ENCODE measurements at regions of chr19 and their contacts with region 1.

Region 1: DNA sequence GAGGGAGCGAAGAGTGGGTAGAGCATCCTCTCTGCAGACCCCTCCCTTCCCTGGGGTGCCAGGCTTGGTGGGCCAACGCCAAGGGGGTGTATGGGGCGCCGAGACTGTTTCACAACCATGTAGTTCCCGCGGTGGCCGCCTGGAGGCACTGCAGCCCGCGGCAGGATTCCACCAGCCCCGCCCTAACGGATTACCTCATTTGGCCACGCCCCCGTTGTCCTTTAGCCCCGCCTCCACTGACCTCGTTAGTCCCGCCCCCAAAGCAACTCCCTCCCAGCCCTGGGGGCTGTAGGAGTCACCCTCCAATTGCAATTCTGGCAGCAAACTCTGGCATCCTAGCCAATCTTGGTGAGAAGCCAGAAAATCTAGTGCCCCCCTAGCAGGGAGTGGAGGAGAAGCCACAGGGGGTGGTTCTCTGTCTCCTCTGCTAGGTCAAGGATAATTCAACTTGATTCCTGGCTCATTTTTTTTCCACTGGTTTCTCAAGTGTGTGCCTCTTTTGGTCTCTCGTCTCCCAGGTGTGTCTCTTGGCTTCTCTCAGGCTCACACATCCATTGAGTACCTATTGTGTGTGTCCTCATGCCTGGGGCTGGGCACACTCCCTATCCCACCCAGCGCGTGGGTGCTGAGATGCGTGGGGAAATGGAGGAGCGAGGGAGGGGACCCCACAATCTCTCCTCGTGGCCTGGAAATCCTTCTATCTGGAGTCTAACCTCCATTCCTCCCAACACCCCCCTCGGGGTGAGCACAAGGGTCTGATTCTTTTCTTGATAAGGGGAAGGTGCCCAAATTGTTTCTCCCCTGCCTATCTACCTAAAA is 2.0 kb downstream of the OLFM2 start:
- DNase-seq: peak; percentile 77 to 100
- H3K4me3 ChIP-seq: peak overlapping the region; percentile 67 to 83 (median 80); a peak in 5 of 8 replicates
- H3K27ac ChIP-seq: no peak overlapping the region
- H3K4me1 ChIP-seq: peaks cover 4 to 14% (median 6%) of the 10 kb centered on the region in 4 experiments
- H3K27me3 ChIP-seq: peaks cover 0 to 2% (median 0%) of the 10 kb centered on the region in 4 experiments; a peak in 2 of 7 replicates
- CTCF ChIP-seq: peak; percentile 94 to 97 (median 96)
- EP300 ChIP-seq: no peak; a peak in 1 of 3 replicates
- POLR2A ChIP-seq: 0 out of 3 replicates have a peak, but pooled peaks of 1 of the 2 experiments have one; percentile 29
- RAD21 ChIP-seq: peak; percentile 96 to 98

Region 2: GRCh38 chr19:9834307-9834725 is 100.0 kb before region 1 on chr19:
- CTCF ChIA-PET with region 1: no interaction called
- POLR2A ChIA-PET with region 1: no interaction called
- DNase-seq: no peak
- H3K4me3 ChIP-seq: peak overlapping the region in 2 of 4 experiments; percentile 24 to 49; a peak in 3 of 8 replicates
- H3K27ac ChIP-seq: no peak overlapping the region
- H3K4me1 ChIP-seq: peaks cover 0 to 4% (median 1%) of the 10 kb centered on the region in 4 experiments; a peak in 3 of 7 replicates
- H3K27me3 ChIP-seq: no peaks in the 10 kb centered on the region
- CTCF ChIP-seq: no peak
- EP300 ChIP-seq: no peak
- POLR2A ChIP-seq: no peak
- RAD21 ChIP-seq: no peak

Region 3: DNA sequence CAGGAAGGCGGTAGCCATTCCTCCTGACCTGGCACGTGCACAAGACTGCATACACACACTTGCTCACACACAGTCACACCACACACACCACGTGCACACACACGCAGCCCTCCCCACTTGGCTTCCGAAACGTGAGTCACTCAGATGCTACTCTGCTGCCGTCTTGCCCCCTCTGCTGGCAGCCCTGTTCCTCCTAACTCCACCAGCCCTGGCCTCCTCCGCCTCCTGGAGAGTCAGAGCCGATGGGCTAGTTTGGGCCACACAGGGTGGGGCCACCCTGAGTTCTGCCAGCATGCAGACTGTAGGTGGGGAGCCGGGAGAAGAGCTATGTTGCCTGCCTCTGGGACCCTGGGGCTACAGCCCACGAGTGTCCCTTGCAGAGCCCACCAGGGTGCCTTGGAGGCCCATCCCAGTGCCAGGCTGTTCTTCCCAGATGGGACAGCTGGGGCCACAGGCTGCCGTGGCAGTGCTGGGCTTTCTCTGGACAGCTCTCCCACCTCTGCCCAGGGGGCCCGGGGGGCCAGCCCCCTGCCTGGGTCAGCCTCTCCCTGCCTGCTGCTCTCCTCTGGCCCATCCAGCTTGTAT is 87.2 kb before region 1 on chr19:
- CTCF ChIA-PET with region 1: interaction called, 11 read pairs
- POLR2A ChIA-PET with region 1: no interaction called
- DNase-seq: peak; percentile 51 to 79
- H3K4me3 ChIP-seq: no peak overlapping the region
- H3K27ac ChIP-seq: no peak overlapping the region
- H3K4me1 ChIP-seq: peaks cover 0 to 16% (median 9%) of the 10 kb centered on the region in 4 experiments; a peak in 6 of 7 replicates
- H3K27me3 ChIP-seq: no peaks in the 10 kb centered on the region
- CTCF ChIP-seq: peak; percentile 68 to 96 (median 93)
- EP300 ChIP-seq: no peak
- POLR2A ChIP-seq: no peak
- RAD21 ChIP-seq: peak; percentile 53 to 66

Region 4: GRCh38 chr19:9857920-9858746 is 76.2 kb before region 1 on chr19:
- CTCF ChIA-PET with region 1: no interaction called
- POLR2A ChIA-PET with region 1: no interaction called
- DNase-seq: no peak
- H3K4me3 ChIP-seq: no peak overlapping the region
- H3K27ac ChIP-seq: no peak overlapping the region
- H3K4me1 ChIP-seq: no peaks in the 10 kb centered on the region; a peak in 1 of 7 replicates
- H3K27me3 ChIP-seq: no peaks in the 10 kb centered on the region
- CTCF ChIP-seq: no peak
- EP300 ChIP-seq: no peak
- POLR2A ChIP-seq: no peak
- RAD21 ChIP-seq: no peak

Region 5: GRCh38 chr19:9966448-9967143 is 32.3 kb after region 1 on chr19:
- CTCF ChIA-PET with region 1: interaction called, 22 read pairs
- POLR2A ChIA-PET with region 1: interaction called, 4 read pairs
- DNase-seq: peak; percentile 49 to 83
- H3K4me3 ChIP-seq: peak overlapping the region; percentile 4 to 56 (median 42); a peak in 7 of 8 replicates
- H3K27ac ChIP-seq: no peak overlapping the region
- H3K4me1 ChIP-seq: peaks cover 0 to 9% (median 0%) of the 10 kb centered on the region in 4 experiments; a peak in 2 of 7 replicates
- H3K27me3 ChIP-seq: peaks cover 0 to 10% (median 7%) of the 10 kb centered on the region in 4 experiments; a peak in 6 of 7 replicates
- CTCF ChIP-seq: peak in 2 of 3 experiments; percentile 27; a peak in 2 of 4 replicates
- EP300 ChIP-seq: no peak
- POLR2A ChIP-seq: 0 out of 3 replicates have a peak, but pooled peaks of 1 of the 2 experiments have one; percentile 29
- RAD21 ChIP-seq: peak in 1 of 2 experiments; percentile 38; a peak in 2 of 4 replicates

Region 6: GRCh38 chr19:10000171-10000826 is 66.0 kb after region 1 on chr19:
- CTCF ChIA-PET with region 1: interaction called, 82 read pairs
- POLR2A ChIA-PET with region 1: interaction called, 4 read pairs
- DNase-seq: peak; percentile 44 to 87
- H3K4me3 ChIP-seq: no peak overlapping the region
- H3K27ac ChIP-seq: no peak overlapping the region
- H3K4me1 ChIP-seq: no peaks in the 10 kb centered on the region
- H3K27me3 ChIP-seq: no peaks in the 10 kb centered on the region; a peak in 3 of 7 replicates
- CTCF ChIP-seq: peak; percentile 77 to 89 (median 79)
- EP300 ChIP-seq: no peak
- POLR2A ChIP-seq: no peak
- RAD21 ChIP-seq: peak; percentile 79 to 80

Region 7: DNA sequence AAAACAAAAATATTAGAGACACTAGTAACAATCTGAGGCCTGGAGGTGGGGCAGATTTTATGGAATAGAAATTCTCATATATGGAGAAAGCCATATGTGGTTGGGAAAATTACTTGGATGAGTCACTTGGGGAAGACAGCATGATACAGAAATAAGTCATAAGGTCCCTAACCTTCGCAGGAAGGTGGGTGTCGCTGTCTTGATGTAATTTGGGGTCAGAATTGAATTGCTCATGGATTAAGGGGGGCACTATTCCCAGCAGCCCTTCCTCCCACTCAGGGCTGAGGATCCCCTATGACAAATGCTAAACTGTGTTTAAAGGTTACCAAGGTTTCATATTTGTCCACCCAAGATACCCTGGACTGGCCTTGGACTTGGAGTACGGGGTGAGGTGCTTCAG is 83.9 kb after region 1 on chr19:
- CTCF ChIA-PET with region 1: interaction called, 45 read pairs
- POLR2A ChIA-PET with region 1: no interaction called
- DNase-seq: no peak
- H3K4me3 ChIP-seq: no peak overlapping the region
- H3K27ac ChIP-seq: no peak overlapping the region
- H3K4me1 ChIP-seq: no peaks in the 10 kb centered on the region
- H3K27me3 ChIP-seq: no peaks in the 10 kb centered on the region
- CTCF ChIP-seq: no peak
- EP300 ChIP-seq: no peak
- POLR2A ChIP-seq: no peak
- RAD21 ChIP-seq: no peak

Region 8: GRCh38 chr19:10036601-10037071 is 102.3 kb after region 1 on chr19:
- CTCF ChIA-PET with region 1: interaction called, 54 read pairs
- POLR2A ChIA-PET with region 1: no interaction called
- DNase-seq: no peak
- H3K4me3 ChIP-seq: no peak overlapping the region
- H3K27ac ChIP-seq: no peak overlapping the region
- H3K4me1 ChIP-seq: no peaks in the 10 kb centered on the region
- H3K27me3 ChIP-seq: no peaks in the 10 kb centered on the region; a peak in 1 of 7 replicates
- CTCF ChIP-seq: no peak
- EP300 ChIP-seq: no peak
- POLR2A ChIP-seq: no peak
- RAD21 ChIP-seq: no peak

Region 9: GRCh38 chr19:10112895-10113591 is 178.7 kb after region 1 on chr19:
- CTCF ChIA-PET with region 1: interaction called, 42 read pairs
- POLR2A ChIA-PET with region 1: interaction called, 41 read pairs
- DNase-seq: peak in 1 of 2 experiments; percentile 94
- H3K4me3 ChIP-seq: no peak overlapping the region
- H3K27ac ChIP-seq: no peak overlapping the region
- H3K4me1 ChIP-seq: no peaks in the 10 kb centered on the region
- H3K27me3 ChIP-seq: no peaks in the 10 kb centered on the region
- CTCF ChIP-seq: peak; percentile 77 to 80 (median 79)
- EP300 ChIP-seq: no peak
- POLR2A ChIP-seq: peak in 1 of 2 experiments; percentile 31; a peak in 1 of 3 replicates
- RAD21 ChIP-seq: peak; percentile 53 to 69